Thyroid gland (tissue), 4 donors: ENCODE measurements at regions of chr7 and their contacts with region 1.

Region 1: DNA sequence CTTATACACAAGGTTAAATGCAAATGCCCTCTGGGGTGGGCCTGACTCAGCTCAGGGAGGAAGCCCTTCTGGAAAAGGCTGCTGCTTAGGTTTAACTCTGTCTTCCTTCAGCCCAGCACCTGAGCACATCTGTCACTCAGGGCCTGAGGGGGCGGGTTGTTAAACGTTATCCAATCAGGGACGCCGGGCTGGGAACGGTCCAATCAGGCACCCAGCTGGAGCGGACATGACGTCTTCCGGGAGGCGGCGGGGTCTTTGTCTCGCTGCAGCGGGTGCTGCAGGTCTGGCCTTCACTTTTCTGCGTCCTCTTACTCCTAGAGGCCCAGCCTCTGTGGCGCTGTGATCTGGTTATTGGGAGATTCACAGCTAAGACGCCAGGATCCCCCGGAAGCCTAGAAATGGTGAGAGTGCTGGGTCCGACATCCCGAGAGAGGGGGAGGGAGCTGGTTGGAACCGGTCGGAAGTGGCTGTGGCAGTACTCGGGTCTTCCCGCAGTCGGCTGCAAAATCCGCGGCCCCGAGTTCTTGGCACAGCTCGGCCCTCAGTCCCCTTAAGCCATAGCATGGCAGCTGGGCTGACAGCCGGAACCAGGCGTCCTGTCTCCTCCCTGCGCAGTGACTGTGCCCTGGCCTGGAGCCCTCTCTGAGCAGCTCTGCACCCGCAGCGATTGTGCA is at the start of gene ZNF138:
- DNase-seq: peak; percentile 97 to 98
- H3K4me3 ChIP-seq: peak within 1 kb of the TSS; percentile 57 to 93 (median 83)
- H3K27ac ChIP-seq: peak within 1 kb of the TSS; percentile 3 to 73 (median 62)
- H3K4me1 ChIP-seq: peaks cover 0 to 5% of the 10 kb centered on the region in 2 donors
- H3K27me3 ChIP-seq: no peaks in the 10 kb centered on the region
- CTCF ChIP-seq: peak in 3 of 6 experiments; percentile 17 to 35 (median 31)
- POLR2A ChIP-seq: peak in 1 of 2 donors; percentile 76
- total RNA-seq, gene ZNF138: 13.3 to 30.5 (median 21.8) TPM

Region 2: DNA sequence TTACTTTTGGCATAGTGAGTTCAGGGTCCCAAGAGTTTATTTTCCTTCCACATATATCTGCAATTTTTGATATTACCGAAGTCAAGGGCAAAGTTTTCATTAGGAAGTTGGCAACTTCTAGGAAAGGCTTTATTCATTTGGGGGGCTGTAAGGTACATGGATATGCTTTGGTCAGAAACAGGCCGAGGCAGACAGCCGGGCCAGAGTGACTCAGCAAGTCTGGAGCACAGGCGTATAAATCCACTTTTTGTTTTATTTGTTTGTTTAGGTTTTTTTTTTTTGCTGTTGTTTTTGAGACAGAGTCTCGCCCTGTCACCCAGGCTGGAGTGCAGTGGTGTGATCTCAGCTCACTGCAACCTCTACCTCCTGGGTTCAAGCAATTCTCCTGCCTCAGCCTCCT is 235.1 kb before region 1 on chr7:
- intact Hi-C with region 1: no loop called
- DNase-seq: peak; percentile 61 to 70
- H3K4me3 ChIP-seq: no peak overlapping the region
- H3K27ac ChIP-seq: peak overlapping the region; percentile 74 to 92 (median 89)
- H3K4me1 ChIP-seq: peaks cover 52 to 65% of the 10 kb centered on the region in 2 donors
- H3K27me3 ChIP-seq: no peaks in the 10 kb centered on the region
- CTCF ChIP-seq: no peak
- POLR2A ChIP-seq: peak in 1 of 2 donors; percentile 30

Region 3: DNA sequence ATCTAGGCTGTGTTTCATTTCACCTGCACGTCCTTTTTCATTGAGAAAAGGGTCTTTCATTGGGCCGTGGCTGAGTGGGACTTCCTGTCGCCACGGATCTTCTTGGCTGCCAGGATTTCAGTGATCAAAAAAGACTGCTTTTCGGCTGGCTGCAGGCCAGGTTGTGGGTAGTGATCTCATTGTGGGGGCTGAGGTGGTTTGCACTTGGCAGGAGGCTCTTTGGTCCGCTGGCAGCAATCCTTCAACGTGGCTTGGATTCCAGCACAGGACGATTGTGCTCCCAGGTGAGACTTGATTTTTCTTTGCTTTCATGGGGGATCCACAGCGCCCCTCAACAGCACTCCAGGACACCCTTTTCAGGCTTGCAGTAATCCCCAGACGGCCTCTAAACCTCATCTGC is 79.8 kb after region 1 on chr7:
- intact Hi-C with region 1: no loop called
- DNase-seq: peak; percentile 65 to 67
- H3K4me3 ChIP-seq: no peak overlapping the region
- H3K27ac ChIP-seq: no peak overlapping the region
- H3K4me1 ChIP-seq: peaks cover 0 to 10% of the 10 kb centered on the region in 2 donors
- H3K27me3 ChIP-seq: no peaks in the 10 kb centered on the region
- CTCF ChIP-seq: no peak
- POLR2A ChIP-seq: no peak

Region 4: DNA sequence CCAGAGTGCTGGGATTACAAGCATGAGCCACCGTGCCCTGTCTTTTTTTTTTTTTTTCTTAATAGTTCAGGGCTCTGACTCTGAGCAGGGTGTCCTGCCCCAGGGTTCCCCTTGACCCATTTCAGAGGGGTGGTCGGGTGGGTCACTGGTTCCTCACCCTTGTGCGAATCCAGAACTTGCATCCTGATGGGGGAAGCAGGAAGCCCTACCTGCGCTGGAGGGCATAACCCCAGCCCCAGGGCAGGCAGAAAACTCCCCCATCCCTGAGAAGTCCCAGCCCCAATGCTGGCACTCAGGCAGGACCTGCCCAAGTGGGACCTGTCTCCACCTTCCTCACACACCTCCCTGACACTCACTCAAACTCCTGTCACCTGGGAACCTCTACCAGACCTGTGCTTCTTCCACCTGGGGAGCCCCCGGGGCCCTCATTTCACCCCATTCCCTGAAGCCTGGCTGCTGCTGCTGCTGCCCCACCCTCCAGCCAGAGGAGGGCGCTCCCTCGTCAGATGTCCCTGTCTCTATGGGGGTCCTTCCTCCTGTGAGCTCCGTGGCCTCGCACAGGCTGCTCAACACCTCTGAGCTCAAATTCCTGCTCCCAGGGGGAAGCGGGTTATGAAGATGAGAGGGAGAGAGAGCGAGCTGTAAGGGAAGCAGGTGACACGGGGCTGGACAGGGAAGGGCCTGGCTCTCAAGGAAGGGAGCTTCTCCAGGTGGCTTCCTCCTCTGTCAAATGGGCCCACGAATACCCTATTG is 93.6 kb after region 1 on chr7:
- intact Hi-C with region 1: loop called (anchors 10 kb)
- DNase-seq: peak; percentile 31 to 43
- H3K4me3 ChIP-seq: peak overlapping the region in 2 of 3 donors; percentile 24 to 31
- H3K27ac ChIP-seq: no peak overlapping the region
- H3K4me1 ChIP-seq: peaks cover 22 to 34% of the 10 kb centered on the region in 2 donors
- H3K27me3 ChIP-seq: no peaks in the 10 kb centered on the region
- CTCF ChIP-seq: peak in 5 of 6 experiments; percentile 15 to 47 (median 21)
- POLR2A ChIP-seq: no peak